ENCODE measurements at regions of chr11 and their contacts with region 1.

Region 1: DNA sequence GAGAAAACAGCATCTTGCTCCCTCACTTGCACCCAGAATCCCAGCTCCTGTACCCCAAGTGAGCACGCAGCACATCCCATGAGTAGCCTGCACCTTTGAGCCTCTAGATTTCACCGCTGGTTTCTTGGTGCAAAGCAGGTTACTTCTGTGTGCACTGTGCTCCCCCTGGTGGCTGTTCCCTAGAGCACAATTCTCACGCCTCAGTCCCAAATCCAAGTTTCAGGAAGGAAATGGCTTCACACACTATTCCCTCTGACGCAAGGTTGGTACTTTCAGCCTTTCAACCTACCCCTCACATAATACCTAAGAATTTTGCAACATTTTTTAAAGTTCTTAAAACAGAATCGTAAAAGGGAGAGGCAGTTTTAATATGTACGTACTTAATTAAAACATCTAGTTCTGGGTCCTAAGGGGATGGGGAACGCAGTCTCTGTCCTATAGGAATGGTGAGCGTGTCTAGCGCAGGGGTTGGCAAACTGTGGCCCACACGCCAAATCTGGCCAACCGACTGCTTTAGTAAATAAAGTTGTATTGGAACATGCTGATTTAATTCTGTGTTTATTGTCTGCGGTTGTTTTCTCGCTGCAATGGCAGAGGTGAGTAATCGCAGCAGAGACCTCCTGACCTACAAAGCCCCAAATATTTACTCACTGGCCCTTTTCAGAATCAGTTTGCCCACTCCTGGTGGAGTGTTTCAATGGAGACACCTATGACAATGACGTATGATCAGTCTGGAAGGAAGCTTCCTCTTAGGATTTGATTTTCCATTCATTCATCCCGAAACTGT is 27.5 kb downstream of the DHCR7 start:
- DNase-seq: peak; percentile 25
- ATAC-seq: peak; percentile 71
- H3K4me3 ChIP-seq: no peak overlapping the region
- H3K27ac ChIP-seq: no peak overlapping the region
- H3K4me1 ChIP-seq: peaks cover 42% of the 10 kb centered on the region
- H3K27me3 ChIP-seq: no peaks in the 10 kb centered on the region
- CTCF ChIP-seq: peak; percentile 76 to 84 (median 83)
- EP300 ChIP-seq: no peak
- POLR2A ChIP-seq: no peak
- RAD21 ChIP-seq: peak; percentile 76

Region 2: DNA sequence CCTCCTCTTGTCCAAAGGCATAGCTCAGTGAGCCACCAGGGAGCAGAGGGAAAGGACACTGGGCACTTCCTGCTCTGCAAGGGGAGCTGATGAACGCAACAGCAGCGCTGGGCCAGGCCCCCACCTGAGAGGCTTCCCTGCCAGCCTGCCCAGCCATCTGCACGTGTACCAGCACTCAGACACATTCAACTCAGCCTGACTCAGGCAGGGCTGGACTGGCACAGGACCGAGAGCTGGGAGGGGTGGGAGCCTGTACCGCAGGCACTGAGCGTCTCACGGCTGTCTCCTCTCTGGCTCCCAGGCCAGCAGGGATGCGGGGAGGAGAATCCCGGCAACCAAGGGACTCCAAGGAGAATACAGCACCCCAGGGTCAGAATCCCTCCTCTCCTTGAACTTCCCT is 610.5 kb before region 1 on chr11:
- CTCF ChIA-PET with region 1: interaction called, 7 read pairs
- POLR2A ChIA-PET with region 1: no interaction called
- RAD21 ChIA-PET with region 1: interaction called, 3 read pairs
- SMC1A ChIA-PET with region 1: interaction called, 3 read pairs
- in situ Hi-C with region 1: loop called (anchors 5 kb)
- intact Hi-C with region 1: loop called (anchors 1 kb)
- DNase-seq: no peak
- ATAC-seq: no peak
- H3K4me3 ChIP-seq: no peak overlapping the region
- H3K27ac ChIP-seq: no peak overlapping the region
- H3K4me1 ChIP-seq: no peaks in the 10 kb centered on the region
- H3K27me3 ChIP-seq: no peaks in the 10 kb centered on the region; a peak in 1 of 4 replicates
- CTCF ChIP-seq: no peak
- EP300 ChIP-seq: no peak
- POLR2A ChIP-seq: no peak
- RAD21 ChIP-seq: no peak

Region 3: DNA sequence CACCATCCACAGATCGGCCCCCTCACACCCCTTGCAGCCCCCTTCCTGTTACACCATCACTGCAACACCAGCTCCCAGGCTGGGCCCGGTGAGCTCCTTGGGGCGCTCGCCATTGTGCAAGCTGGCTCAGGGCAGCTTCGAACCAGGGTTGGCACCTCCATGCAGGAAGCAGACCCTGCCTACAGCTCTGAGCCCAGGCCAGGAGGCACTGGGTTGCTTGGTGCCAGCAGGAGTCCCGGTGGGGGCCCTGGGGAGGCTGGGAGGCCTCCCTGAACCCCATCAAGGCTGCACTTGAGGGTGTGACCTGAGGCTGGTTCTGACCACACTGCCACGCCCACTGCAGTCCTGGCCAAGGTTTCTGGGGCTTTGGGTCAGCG is 605.2 kb before region 1 on chr11:
- CTCF ChIA-PET with region 1: interaction called, 7 read pairs
- POLR2A ChIA-PET with region 1: no interaction called
- RAD21 ChIA-PET with region 1: interaction called, 3 read pairs
- SMC1A ChIA-PET with region 1: interaction called, 3 read pairs
- in situ Hi-C with region 1: loop called (anchors 5 kb)
- intact Hi-C with region 1: loop called (anchors 1 kb)
- DNase-seq: no peak
- ATAC-seq: no peak
- H3K4me3 ChIP-seq: no peak overlapping the region
- H3K27ac ChIP-seq: no peak overlapping the region
- H3K4me1 ChIP-seq: no peaks in the 10 kb centered on the region
- H3K27me3 ChIP-seq: no peaks in the 10 kb centered on the region
- CTCF ChIP-seq: no peak
- EP300 ChIP-seq: no peak
- POLR2A ChIP-seq: no peak
- RAD21 ChIP-seq: no peak

Region 4: DNA sequence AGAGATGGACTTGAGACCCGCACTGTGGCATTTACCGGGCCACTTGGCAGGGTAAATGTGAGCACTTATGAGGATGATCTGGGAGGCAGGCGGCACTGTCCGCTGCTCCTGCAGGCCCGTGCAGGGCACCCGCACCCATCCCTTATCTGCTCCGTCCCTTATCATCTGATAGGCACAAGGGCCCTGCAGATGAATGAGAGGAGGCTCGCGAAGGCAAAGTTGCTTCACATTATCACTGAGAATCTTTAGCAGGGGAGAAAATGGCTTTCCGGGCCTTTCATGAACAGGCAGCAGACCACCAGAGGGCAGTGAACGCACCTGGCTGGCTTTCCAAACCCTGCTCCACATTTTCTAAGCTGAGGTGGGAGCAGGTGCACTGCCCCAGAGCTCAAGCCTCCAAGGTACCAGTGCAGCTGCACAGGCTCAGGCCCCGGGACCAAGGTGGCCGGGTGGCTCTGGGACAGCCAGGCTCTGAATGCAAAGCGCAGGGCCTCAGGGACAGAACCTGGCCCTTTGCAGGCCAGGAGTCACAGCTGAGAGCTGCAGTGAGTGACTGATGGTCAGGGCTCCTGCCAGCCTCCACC is 333.9 kb before region 1 on chr11:
- CTCF ChIA-PET with region 1: interaction called, 9 read pairs
- POLR2A ChIA-PET with region 1: no interaction called
- RAD21 ChIA-PET with region 1: interaction called, 4 read pairs
- SMC1A ChIA-PET with region 1: no interaction called
- in situ Hi-C with region 1: no loop called
- intact Hi-C with region 1: loop called (anchors 2 kb)
- DNase-seq: no peak
- ATAC-seq: peak; percentile 40; the same call in 2 of the 3 replicates
- H3K4me3 ChIP-seq: no peak overlapping the region
- H3K27ac ChIP-seq: no peak overlapping the region
- H3K4me1 ChIP-seq: no peaks in the 10 kb centered on the region
- H3K27me3 ChIP-seq: no peaks in the 10 kb centered on the region
- CTCF ChIP-seq: peak; percentile 38 to 47 (median 46); a peak in 5 of 6 replicates
- EP300 ChIP-seq: no peak
- POLR2A ChIP-seq: no peak
- RAD21 ChIP-seq: 0 out of 2 replicates have a peak, but pooled peaks have one; percentile 12

Region 5: GRCh38 chr11:71372693-71373657 is 47.7 kb before region 1 on chr11:
- CTCF ChIA-PET with region 1: interaction called, 61 read pairs
- POLR2A ChIA-PET with region 1: interaction called, 3 read pairs
- RAD21 ChIA-PET with region 1: interaction called, 14 read pairs
- SMC1A ChIA-PET with region 1: interaction called, 39 read pairs
- in situ Hi-C with region 1: no loop called
- intact Hi-C with region 1: loop called (anchors 1 kb)
- DNase-seq: peak; percentile 53
- ATAC-seq: peak; percentile 85
- H3K4me3 ChIP-seq: peak overlapping the region; percentile 34; the same call in 1 of the 2 replicates
- H3K27ac ChIP-seq: peak overlapping the region; percentile 60
- H3K4me1 ChIP-seq: peaks cover 34% of the 10 kb centered on the region
- H3K27me3 ChIP-seq: no peaks in the 10 kb centered on the region
- CTCF ChIP-seq: peak; percentile 13 to 25 (median 20); a peak in 2 of 6 replicates
- EP300 ChIP-seq: peak in 1 of 2 experiments; percentile 38; a peak in 2 of 4 replicates
- POLR2A ChIP-seq: no peak
- RAD21 ChIP-seq: 0 out of 2 replicates have a peak, but pooled peaks have one; percentile 13

Region 6: DNA sequence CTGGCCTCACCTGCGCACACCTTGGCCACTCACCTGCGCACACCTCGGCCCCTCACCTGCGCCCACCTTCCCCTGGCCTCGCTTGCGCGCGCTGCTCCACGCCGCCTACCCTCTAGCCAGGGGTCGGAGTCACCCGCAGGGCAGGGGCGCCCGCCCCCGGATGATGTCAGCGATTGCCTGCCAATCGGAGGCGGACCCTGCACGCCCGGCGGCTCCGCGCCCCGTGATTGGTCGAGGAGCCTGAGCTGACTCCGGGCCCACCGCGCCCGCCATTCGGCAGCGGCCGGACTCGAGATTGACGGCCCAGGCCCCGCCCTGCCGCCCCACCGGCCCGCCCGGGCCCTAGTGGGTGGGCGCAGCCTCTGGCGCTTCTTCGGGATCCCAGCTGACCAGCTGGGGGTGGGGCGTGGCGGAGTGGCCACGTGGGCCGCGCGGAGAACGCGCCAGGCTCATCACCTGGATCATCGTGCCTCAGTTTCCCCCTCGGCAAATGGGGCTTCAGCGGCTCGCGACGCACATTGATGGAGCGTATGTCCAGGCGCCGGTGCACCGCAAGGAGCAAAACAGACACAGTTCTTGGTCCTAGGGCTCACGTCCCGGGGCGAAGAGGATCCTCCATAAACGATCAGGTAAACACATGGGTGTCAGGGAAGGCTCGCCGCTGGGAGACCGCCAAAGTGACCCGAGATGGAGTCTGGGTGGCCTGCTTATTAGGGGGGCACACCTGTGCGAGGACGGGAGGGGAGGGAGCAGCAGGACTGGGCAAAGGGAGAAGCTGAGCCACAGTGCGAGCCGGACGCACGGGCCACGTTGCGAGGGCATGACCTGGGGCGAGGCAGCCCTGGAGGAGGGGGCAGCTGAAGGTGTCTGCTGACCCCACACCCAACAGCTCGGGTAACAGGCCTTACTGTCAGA is 27.9 kb after region 1 on chr11 and contains the start of gene DHCR7:
- CTCF ChIA-PET with region 1: interaction called, 12 read pairs
- POLR2A ChIA-PET with region 1: interaction called, 4 read pairs
- RAD21 ChIA-PET with region 1: interaction called, 7 read pairs
- SMC1A ChIA-PET with region 1: interaction called, 6 read pairs
- in situ Hi-C with region 1: no loop called
- intact Hi-C with region 1: no loop called
- DNase-seq: peak; percentile 76
- ATAC-seq: peak; percentile 92
- H3K4me3 ChIP-seq: peak within 1 kb of the TSS; percentile 85
- H3K27ac ChIP-seq: peak within 1 kb of the TSS; percentile 59
- H3K4me1 ChIP-seq: peaks cover 9% of the 10 kb centered on the region; the same call in 1 of the 2 replicates
- H3K27me3 ChIP-seq: no peaks in the 10 kb centered on the region
- CTCF ChIP-seq: no peak
- EP300 ChIP-seq: no peak
- POLR2A ChIP-seq: peak; percentile 89
- RAD21 ChIP-seq: no peak
- polyA plus RNA-seq, gene DHCR7: 4.2 to 13.8 TPM

Region 7: DNA sequence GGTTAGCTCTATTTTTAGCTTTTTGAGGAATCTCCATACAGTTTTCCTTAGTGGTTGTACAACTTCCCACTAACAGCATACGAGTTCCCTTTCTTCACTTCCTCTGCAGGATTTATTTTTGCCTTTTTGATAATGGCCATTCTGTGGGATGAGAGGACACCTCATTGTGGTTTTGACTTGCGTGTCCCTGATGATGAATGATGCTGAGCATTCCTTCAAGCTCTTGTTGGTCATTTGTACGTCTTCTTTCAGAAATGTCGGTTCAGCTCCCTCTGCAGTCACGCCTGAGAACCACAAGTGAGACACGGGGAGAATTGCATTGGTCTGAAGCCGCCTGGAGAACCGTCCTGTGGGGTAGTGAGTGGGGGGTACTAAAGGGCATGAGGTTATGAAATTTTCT is 142.8 kb after region 1 on chr11:
- CTCF ChIA-PET with region 1: interaction called, 8 read pairs
- POLR2A ChIA-PET with region 1: no interaction called
- RAD21 ChIA-PET with region 1: no interaction called
- SMC1A ChIA-PET with region 1: no interaction called
- in situ Hi-C with region 1: no loop called
- intact Hi-C with region 1: loop called (anchors 10 kb)
- DNase-seq: no peak
- ATAC-seq: peak; percentile 75
- H3K4me3 ChIP-seq: no peak overlapping the region
- H3K27ac ChIP-seq: no peak overlapping the region
- H3K4me1 ChIP-seq: no peaks in the 10 kb centered on the region
- H3K27me3 ChIP-seq: no peaks in the 10 kb centered on the region
- CTCF ChIP-seq: peak; percentile 66 to 71 (median 69)
- EP300 ChIP-seq: no peak
- POLR2A ChIP-seq: no peak
- RAD21 ChIP-seq: peak; percentile 83

Measured in GM12878 (cell line).